Activated T-helper 2 cell treated with anti-CD3 and anti-CD28 coated beads, Interferon-gamma antibody, Interleukin-2, Interleukin-4, amounts not matched to agents 10 μg/mL and 5 μg/mL and 100 μg/mL, durations not matched to agents 14 hours and 24 hours and 36 hours (primary cell): ENCODE measurements at regions of chr10 and their contacts with region 1.

Region 1: GRCh38 chr10:30534465-30535144 is 94.9 kb downstream of the LYZL2 start:
- DNase-seq: peak; percentile 58
- H3K4me3 Mint-ChIP-seq: no peak overlapping the region
- H3K27ac Mint-ChIP-seq: no peak overlapping the region
- H3K4me1 Mint-ChIP-seq: peaks cover 34% of the 10 kb centered on the region
- H3K27me3 Mint-ChIP-seq: peaks cover 8% of the 10 kb centered on the region

Region 2: DNA sequence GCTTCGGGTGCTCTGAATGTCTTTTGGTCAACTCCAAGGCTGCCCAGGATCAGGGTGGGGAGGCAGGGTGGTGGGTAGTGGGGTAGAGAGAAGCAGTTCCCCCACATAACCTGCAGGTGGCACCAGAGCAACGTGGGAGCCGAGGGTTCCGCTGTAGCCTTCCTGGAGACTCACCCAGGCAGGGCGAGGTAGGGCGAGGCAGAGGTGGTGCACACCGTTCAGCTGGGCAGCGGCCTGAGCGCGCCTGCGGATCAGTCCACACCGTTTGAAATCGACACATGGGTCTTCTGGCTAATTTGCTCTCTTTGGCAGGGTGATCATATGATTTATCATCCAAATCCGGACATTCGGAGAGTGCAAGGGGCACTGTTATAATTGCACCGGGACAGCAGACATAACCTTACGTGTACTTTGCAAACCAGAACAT is 142.0 kb before region 1 on chr10:
- intact Hi-C with region 1: loop called (anchors 1 kb)
- DNase-seq: peak; percentile 68
- H3K4me3 Mint-ChIP-seq: no peak overlapping the region
- H3K27ac Mint-ChIP-seq: no peak overlapping the region
- H3K4me1 Mint-ChIP-seq: peaks cover 14% of the 10 kb centered on the region
- H3K27me3 Mint-ChIP-seq: peaks cover 22% of the 10 kb centered on the region

Region 3: DNA sequence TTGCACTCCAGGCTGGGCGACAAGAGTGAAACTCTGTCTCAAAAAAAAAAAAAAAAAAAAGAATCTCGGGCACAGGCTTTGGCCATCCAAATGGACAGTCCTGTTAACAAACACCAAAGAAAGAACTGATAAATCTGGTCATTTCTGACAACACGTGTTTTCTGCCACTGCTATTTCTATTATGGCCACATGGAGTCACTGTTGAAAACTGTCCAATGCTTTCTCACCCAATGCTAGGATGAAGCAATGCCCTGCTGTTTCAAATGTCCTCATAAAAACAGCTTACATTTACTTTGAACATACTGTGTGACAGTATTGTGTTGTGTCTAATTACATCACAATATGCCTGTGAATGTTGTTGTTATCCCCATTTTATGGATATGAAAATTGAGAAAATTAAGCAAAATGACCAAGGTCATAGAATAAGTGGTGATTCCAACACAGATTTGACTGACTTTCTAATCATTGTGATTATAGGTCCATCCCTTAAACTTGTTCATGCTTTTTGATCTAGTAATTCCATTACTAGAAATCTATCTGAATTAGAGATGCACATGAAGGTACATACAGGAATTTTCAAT is 120.5 kb before region 1 on chr10:
- intact Hi-C with region 1: loop called (anchors 1 kb)
- DNase-seq: no peak
- H3K4me3 Mint-ChIP-seq: no peak overlapping the region
- H3K27ac Mint-ChIP-seq: no peak overlapping the region
- H3K4me1 Mint-ChIP-seq: peaks cover 28% of the 10 kb centered on the region
- H3K27me3 Mint-ChIP-seq: peaks cover 2% of the 10 kb centered on the region

Region 4: GRCh38 chr10:30493609-30494530 is 40.7 kb before region 1 on chr10:
- intact Hi-C with region 1: loop called (anchors 5 kb)
- DNase-seq: no peak
- H3K4me3 Mint-ChIP-seq: no peak overlapping the region
- H3K27ac Mint-ChIP-seq: no peak overlapping the region
- H3K4me1 Mint-ChIP-seq: peaks cover 71% of the 10 kb centered on the region
- H3K27me3 Mint-ChIP-seq: peaks cover 19% of the 10 kb centered on the region

Region 5: DNA sequence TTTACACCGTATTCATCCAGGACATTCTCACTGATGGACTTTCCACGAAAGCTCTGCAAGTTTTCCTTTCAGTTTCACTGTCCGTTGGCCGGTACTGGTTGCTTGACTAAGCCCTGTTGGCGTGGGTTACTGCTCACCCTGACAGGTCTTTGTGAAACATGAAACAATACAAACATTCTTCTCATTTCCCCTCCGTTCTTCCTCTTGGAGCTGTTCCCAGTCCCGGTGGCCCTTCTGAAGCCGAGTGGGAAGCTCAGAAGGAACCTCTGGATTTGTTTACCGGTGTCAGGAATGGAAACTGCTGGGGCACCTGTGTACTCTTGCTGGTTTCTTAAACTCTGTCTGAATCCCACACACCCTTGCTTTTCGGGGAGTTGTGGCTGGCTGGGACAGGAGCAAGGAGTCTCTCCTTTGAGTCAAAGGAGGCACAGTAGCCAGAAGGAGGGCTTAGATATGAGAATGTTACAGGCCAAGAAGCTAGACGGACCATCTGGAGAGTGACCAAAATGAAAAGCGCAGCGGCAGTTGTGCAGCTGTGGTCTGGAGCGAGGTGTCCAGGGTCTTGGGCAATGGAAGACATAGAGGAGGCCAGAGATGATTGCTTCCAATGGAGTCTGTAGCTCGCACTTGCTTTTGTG is 49.3 kb after region 1 on chr10:
- intact Hi-C with region 1: loop called (anchors 5 kb)
- DNase-seq: no peak
- H3K4me3 Mint-ChIP-seq: peak overlapping the region; percentile 15
- H3K27ac Mint-ChIP-seq: peak overlapping the region; percentile 29
- H3K4me1 Mint-ChIP-seq: peaks cover 8% of the 10 kb centered on the region
- H3K27me3 Mint-ChIP-seq: peaks cover 22% of the 10 kb centered on the region

Region 6: DNA sequence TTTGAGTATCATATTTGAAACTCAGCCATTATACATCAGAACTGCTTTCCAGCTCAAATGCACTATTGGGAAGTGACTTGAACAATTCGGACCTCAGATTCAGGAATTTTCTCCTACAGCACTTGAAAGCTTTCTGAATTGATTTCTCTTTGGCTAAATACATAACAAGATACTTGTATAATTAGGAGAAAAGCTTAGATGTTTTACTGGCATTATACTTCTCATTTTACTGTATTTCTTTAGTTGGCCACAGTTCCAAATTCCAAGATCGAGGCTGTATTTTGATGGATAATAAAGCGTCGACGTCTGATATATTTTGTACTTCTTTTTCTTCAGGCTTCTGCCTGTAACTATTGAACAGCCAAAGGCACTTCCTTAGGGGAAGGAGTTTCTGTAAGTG is 121.6 kb after region 1 on chr10:
- intact Hi-C with region 1: no loop called
- DNase-seq: no peak
- H3K4me3 Mint-ChIP-seq: no peak overlapping the region
- H3K27ac Mint-ChIP-seq: no peak overlapping the region
- H3K4me1 Mint-ChIP-seq: peaks cover 11% of the 10 kb centered on the region
- H3K27me3 Mint-ChIP-seq: peaks cover 55% of the 10 kb centered on the region

Region 7: GRCh38 chr10:30783939-30784500 is 249.4 kb after region 1 on chr10:
- intact Hi-C with region 1: no loop called
- DNase-seq: peak; percentile 74
- H3K4me3 Mint-ChIP-seq: peak overlapping the region; percentile 75
- H3K27ac Mint-ChIP-seq: peak overlapping the region; percentile 60
- H3K4me1 Mint-ChIP-seq: peaks cover 31% of the 10 kb centered on the region
- H3K27me3 Mint-ChIP-seq: peaks cover 5% of the 10 kb centered on the region

Region 8: DNA sequence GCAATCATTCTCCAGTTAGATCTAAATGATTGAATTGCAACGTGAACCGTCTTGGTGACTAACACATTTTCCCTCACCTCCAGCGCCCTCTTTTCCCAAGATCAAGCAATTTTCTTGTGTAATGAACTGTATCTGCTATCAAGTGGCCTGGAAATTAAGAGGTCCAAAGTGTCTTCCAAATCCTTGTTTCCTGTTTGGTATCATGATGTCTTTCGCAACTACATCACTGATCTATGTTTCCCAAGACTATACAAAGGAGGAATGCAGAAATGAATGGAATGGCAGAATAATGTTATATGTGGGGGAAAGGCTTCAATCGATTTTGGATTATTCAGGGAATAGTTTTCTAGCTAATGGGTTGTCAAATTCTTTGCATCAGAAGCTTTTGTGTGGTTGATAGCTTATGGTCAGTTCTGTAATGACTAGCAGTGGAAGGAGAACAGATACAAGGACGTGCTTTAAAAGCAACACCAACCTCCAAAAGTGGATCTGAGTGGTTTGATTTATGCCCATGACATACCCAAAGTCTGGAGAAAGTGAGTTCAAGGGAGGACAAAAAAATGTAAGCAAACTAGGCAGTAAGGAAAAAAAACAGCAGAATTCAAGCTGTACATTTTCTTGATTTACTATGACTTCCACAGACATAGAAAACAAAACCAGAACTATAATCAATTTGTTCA is 769.8 kb after region 1 on chr10:
- intact Hi-C with region 1: no loop called
- DNase-seq: no peak
- H3K4me3 Mint-ChIP-seq: no peak overlapping the region
- H3K27ac Mint-ChIP-seq: no peak overlapping the region
- H3K4me1 Mint-ChIP-seq: no peaks in the 10 kb centered on the region
- H3K27me3 Mint-ChIP-seq: peaks cover 2% of the 10 kb centered on the region

Region 9: GRCh38 chr10:31322647-31323046 is 788.0 kb after region 1 on chr10:
- intact Hi-C with region 1: no loop called
- DNase-seq: no peak
- H3K4me3 Mint-ChIP-seq: peak overlapping the region; percentile 54
- H3K27ac Mint-ChIP-seq: no peak overlapping the region
- H3K4me1 Mint-ChIP-seq: peaks cover 27% of the 10 kb centered on the region
- H3K27me3 Mint-ChIP-seq: no peaks in the 10 kb centered on the region